Activated naive CD4-positive, alpha-beta T cell treated with anti-CD3 and anti-CD28 coated beads for 36 hours (primary cell): ENCODE measurements at regions of chr1 and their contacts with region 1.

Region 1: GRCh38 chr1:200510228-200510623 is 100.4 kb upstream of the ZNF281 start:
- DNase-seq: peak; percentile 85
- H3K4me3 Mint-ChIP-seq: no peak overlapping the region
- H3K27ac Mint-ChIP-seq: no peak overlapping the region
- H3K4me1 Mint-ChIP-seq: peaks cover 3% of the 10 kb centered on the region
- H3K27me3 Mint-ChIP-seq: no peaks in the 10 kb centered on the region

Region 2: DNA sequence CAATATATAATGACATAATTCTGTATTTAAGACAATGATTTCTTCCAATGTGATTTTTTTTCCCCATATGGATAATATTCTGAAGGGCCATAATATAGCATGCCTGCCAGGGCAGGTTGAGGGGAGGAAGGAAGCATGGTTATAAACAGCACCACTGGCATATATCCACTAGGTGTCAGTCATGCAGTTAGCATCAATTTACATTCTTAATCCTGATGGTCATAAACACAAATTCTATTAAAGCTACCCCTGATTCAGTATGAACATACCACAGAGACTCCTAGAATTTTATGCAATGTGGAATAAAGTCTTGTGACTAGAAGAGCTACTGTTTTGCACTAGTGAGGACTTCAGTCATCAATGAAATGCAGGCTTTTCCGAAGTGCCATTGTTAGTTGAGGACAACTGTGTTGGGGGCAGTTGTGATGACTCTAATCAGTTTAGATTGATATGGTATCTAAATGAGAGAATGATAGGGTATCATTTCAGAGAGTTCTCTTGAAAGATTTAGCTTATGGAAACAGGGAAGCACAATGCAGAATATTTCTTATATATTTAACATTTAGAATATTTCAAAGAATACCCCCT is 825.4 kb before region 1 on chr1:
- CTCF ChIA-PET with region 1: interaction called, 5 read pairs
- intact Hi-C with region 1: loop called (anchors 1 kb)
- DNase-seq: peak; percentile 31
- H3K4me3 Mint-ChIP-seq: no peak overlapping the region
- H3K27ac Mint-ChIP-seq: no peak overlapping the region
- H3K4me1 Mint-ChIP-seq: no peaks in the 10 kb centered on the region
- H3K27me3 Mint-ChIP-seq: peaks cover 13% of the 10 kb centered on the region

Region 3: GRCh38 chr1:200496937-200497336 is 13.3 kb before region 1 on chr1:
- CTCF ChIA-PET with region 1: interaction called, 12 read pairs
- intact Hi-C with region 1: no loop called
- DNase-seq: no peak
- H3K4me3 Mint-ChIP-seq: no peak overlapping the region
- H3K27ac Mint-ChIP-seq: no peak overlapping the region
- H3K4me1 Mint-ChIP-seq: no peaks in the 10 kb centered on the region
- H3K27me3 Mint-ChIP-seq: peaks cover 3% of the 10 kb centered on the region

Region 4: DNA sequence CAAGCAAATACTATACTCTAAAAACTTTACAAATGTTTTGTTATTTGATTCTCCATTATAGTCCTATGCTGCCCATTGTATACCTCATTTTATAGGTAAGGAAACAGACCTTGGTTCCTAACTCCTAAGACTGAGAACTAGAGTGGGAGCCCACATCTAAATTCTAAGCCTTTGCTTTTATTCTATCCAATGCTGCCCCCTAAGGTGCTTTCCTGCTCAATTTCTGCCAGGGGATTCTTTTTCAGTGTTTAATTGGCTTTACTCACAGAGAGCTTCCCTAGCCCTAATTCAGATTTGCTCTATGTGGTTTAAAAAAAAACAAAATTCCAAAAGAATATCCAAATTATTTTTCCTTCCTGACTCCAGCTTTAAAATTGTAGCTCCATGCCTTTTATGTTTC is 45.8 kb after region 1 on chr1:
- CTCF ChIA-PET with region 1: no interaction called
- intact Hi-C with region 1: no loop called
- DNase-seq: no peak
- H3K4me3 Mint-ChIP-seq: no peak overlapping the region
- H3K27ac Mint-ChIP-seq: no peak overlapping the region
- H3K4me1 Mint-ChIP-seq: no peaks in the 10 kb centered on the region
- H3K27me3 Mint-ChIP-seq: no peaks in the 10 kb centered on the region

Region 5: GRCh38 chr1:200602632-200603031 is 92.4 kb after region 1 on chr1:
- CTCF ChIA-PET with region 1: no interaction called
- intact Hi-C with region 1: no loop called
- DNase-seq: no peak
- H3K4me3 Mint-ChIP-seq: no peak overlapping the region
- H3K27ac Mint-ChIP-seq: no peak overlapping the region
- H3K4me1 Mint-ChIP-seq: no peaks in the 10 kb centered on the region
- H3K27me3 Mint-ChIP-seq: no peaks in the 10 kb centered on the region